Thyroid gland (tissue), 4 donors: ENCODE measurements at regions of chr1 and their contacts with region 1.

Region 1: DNA sequence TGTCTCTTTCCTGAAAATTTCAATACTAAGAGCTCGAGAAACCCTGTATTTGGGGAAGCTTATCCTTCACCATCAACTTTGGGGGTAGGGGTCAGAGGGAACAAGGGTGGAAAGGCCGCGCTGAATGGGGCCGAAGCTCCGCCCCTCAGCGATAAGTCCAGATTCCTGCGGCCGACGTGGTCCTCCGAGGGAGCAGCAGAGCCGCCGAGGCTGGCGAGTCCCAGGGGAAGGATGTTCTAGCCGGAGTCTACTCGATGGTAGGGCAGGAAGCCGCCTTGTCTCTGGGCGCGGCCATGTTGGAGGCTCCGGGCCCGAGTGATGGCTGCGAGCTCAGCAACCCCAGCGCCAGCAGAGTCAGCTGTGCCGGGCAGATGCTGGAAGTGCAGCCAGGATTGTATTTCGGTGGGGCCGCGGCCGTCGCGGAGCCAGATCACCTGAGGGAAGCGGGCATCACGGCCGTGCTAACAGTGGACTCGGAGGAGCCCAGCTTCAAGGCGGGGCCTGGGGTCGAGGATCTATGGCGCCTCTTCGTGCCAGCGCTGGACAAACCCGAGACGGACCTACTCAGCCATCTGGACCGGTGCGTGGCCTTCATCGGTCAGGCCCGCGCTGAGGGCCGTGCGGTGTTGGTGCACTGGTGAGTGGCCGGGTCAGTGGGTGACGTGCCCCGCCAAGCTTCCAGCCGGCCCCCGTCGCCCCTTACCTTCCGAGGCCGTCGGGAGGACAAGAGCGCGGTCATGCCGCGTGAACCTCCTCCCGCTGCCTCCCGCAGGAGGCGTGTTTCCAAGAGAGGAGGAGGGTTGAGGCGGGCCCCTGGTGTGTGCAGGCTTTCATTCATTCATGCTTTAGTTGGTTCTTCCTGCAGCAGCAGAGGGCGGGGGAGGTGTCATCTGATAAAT is at the start of gene DUSP12:
- DNase-seq: peak; percentile 88 to 93
- H3K4me3 ChIP-seq: peak within 1 kb of the TSS; percentile 60 to 95 (median 91)
- H3K27ac ChIP-seq: peak within 1 kb of the TSS; percentile 27 to 88 (median 87)
- H3K4me1 ChIP-seq: peaks cover 7 to 9% of the 10 kb centered on the region in 2 donors
- H3K27me3 ChIP-seq: no peaks in the 10 kb centered on the region
- CTCF ChIP-seq: peak in 1 of 6 experiments; percentile 7
- POLR2A ChIP-seq: peak in 1 of 2 donors; percentile 59
- total RNA-seq, gene DUSP12: 36.6 to 53.7 (median 39.8) TPM

Region 2: GRCh38 chr1:161486806-161487741 is 262.7 kb before region 1 on chr1:
- intact Hi-C with region 1: loop called (anchors 10 kb)
- DNase-seq: peak; percentile 17 to 38
- H3K4me3 ChIP-seq: no peak overlapping the region
- H3K27ac ChIP-seq: no peak overlapping the region
- H3K4me1 ChIP-seq: no peaks in the 10 kb centered on the region
- H3K27me3 ChIP-seq: no peaks in the 10 kb centered on the region
- CTCF ChIP-seq: peak; percentile 31 to 71 (median 54)
- POLR2A ChIP-seq: no peak